Activated CD8-positive, alpha-beta T cell treated with anti-CD3 and anti-CD28 coated beads for 36 hours (primary cell): ENCODE measurements at regions of chr16 and their contacts with region 1.

Region 1: GRCh38 chr16:21599233-21600030 is at the start of gene METTL9:
- DNase-seq: peak; percentile 95
- ATAC-seq: peak; percentile 94
- H3K4me3 Mint-ChIP-seq: peak within 1 kb of the TSS; percentile 98
- H3K27ac Mint-ChIP-seq: peak within 1 kb of the TSS; percentile 88
- H3K4me1 Mint-ChIP-seq: peaks cover 54% of the 10 kb centered on the region
- H3K27me3 Mint-ChIP-seq: no peaks in the 10 kb centered on the region
- CTCF ChIP-seq: no peak
- total RNA-seq, gene METTL9: 116 to 122 TPM

Region 2: DNA sequence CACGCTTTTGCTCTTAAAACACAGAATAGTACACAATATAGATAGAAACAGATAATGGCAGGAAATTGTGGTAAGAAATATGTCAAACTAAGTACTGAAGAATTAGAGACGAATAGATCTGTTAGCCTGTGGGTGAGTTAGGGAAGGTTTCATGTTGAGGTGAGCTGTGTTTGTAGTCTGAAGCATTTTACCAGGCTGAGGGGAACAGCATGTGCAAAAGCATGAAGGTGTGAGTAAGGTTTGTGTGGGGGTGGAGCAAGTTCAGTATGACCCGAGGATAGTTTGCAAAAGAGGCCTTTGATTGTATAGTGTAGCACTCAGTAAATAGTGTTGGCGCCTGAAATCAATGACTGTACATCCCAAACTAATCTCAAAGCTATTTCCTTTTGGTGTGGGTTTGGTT is 39.1 kb after region 1 on chr16:
- CTCF ChIA-PET with region 1: interaction called, 36 read pairs
- POLR2A ChIA-PET with region 1: interaction called, 5 read pairs
- intact Hi-C with region 1: no loop called
- DNase-seq: peak; percentile 54
- ATAC-seq: peak; percentile 88
- H3K4me3 Mint-ChIP-seq: no peak overlapping the region
- H3K27ac Mint-ChIP-seq: peak overlapping the region; percentile 82
- H3K4me1 Mint-ChIP-seq: peaks cover 45% of the 10 kb centered on the region
- H3K27me3 Mint-ChIP-seq: no peaks in the 10 kb centered on the region
- CTCF ChIP-seq: no peak

Region 3: DNA sequence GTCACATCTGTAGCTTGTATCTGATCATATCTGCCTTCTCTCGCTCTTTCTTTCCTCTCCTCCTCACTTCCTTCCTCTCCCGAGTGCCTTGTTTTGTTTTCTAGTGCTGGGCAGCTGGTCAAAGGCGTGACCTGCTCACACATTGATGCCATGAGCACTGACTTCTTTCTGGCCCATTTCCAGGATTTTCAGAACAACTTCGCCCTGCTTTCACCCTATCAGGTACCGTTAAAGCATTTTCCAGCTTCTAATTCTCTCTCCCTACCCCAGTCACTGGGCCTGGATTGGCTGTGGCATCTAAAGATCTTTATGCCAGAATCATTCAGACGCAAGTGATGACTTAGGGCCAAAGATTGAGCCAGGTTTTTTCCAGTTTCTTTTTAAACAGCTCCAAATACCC is 119.9 kb after region 1 on chr16:
- CTCF ChIA-PET with region 1: no interaction called
- POLR2A ChIA-PET with region 1: no interaction called
- intact Hi-C with region 1: no loop called
- DNase-seq: no peak
- ATAC-seq: no peak
- H3K4me3 Mint-ChIP-seq: no peak overlapping the region
- H3K27ac Mint-ChIP-seq: no peak overlapping the region
- H3K4me1 Mint-ChIP-seq: peaks cover 9% of the 10 kb centered on the region
- H3K27me3 Mint-ChIP-seq: no peaks in the 10 kb centered on the region
- CTCF ChIP-seq: no peak